ENCODE measurements at regions of chr14 and their contacts with region 1.

Region 1: DNA sequence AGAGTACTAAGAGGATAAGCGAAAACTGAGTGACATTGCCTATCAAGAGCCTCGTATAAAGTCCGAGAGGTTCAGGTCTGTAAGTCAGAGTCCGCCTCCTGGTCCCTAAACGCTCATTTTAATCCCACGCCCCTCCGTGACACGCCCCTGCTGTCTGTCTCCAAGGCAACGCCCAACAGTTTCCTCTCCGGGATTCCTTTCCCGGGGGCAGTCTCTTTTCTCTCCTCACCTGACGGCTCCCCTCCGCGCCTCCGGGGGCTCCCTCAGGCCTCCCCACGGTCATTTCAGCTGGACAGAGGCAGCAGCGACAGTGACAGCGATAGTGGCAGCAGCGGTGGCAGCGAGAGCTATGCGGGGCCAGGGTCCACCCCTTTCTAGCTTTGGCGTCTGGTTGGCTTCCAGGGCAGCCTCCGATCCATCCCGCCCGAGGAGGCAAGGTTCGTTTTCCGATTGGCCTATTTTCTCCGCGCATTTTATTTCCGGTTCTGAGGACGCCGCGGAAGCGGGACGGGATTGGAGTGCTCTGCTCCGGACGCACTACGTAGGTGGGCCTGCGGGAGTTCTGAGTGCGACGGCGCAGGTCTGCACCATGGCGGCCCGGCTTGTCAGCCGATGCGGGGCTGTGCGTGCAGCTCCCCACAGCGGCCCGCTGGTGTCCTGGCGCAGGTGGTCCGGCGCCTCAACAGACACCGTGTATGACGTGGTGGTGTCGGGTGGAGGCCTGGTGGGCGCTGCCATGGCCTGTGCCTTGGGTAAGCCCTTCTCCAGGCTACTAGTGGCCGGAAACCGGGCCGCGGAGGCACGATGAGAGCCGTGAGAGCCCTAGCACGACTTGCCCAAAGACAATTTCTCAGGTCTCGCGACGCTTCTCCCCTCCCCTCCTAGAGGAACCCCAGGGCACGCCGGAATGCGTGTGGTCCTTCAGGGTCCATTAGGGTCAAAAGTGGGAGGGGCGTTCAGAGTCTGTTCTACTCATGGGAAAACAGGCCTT is at the starts of genes COQ6 and FAM161B:
- DNase-seq: peak; percentile 93
- H3K4me3 Mint-ChIP-seq: peak within 1 kb of the TSS; percentile 99
- H3K27ac Mint-ChIP-seq: peak within 1 kb of the TSS; percentile 88
- H3K4me1 Mint-ChIP-seq: peaks cover 21% of the 10 kb centered on the region
- H3K27me3 Mint-ChIP-seq: no peaks in the 10 kb centered on the region
- total RNA-seq, gene COQ6: 17.9 and 19.2 TPM in 2 replicates
- total RNA-seq, gene FAM161B: 0.76 and 0.83 TPM in 2 replicates

Region 2: DNA sequence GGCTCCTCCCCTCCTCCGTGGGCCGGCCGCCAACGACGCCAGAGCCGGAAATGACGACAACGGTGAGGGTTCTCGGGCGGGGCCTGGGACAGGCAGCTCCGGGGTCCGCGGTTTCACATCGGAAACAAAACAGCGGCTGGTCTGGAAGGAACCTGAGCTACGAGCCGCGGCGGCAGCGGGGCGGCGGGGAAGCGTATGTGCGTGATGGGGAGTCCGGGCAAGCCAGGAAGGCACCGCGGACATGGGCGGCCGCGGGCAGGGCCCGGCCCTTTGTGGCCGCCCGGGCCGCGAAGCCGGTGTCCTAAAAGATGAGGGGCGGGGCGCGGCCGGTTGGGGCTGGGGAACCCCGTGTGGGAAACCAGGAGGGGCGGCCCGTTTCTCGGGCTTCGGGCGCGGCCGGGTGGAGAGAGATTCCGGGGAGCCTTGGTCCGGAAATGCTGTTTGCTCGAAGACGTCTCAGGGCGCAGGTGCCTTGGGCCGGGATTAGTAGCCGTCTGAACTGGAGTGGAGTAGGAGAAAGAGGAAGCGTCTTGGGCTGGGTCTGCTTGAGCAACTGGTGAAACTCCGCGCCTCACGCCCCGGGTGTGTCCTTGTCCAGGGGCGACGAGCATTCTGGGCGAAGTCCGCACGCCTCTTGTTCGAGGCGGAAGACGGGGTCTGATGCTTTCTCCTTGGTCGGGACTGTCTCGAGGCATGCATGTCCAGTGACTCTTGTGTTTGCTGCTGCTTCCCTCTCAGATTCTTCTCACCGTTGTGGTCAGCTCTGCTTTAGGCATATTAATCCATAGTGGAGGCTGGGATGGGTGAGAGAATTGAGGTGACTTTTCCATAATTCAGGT is 813.4 kb before region 1 on chr14 and contains the start of gene PSEN1:
- intact Hi-C with region 1: loop called (anchors 1 kb)
- DNase-seq: peak; percentile 98
- H3K4me3 Mint-ChIP-seq: peak within 1 kb of the TSS; percentile 86
- H3K27ac Mint-ChIP-seq: peak within 1 kb of the TSS; percentile 100
- H3K4me1 Mint-ChIP-seq: peaks cover 19% of the 10 kb centered on the region
- H3K27me3 Mint-ChIP-seq: no peaks in the 10 kb centered on the region
- total RNA-seq, gene PSEN1: 41.1 and 41.9 TPM in 2 replicates

Region 3: DNA sequence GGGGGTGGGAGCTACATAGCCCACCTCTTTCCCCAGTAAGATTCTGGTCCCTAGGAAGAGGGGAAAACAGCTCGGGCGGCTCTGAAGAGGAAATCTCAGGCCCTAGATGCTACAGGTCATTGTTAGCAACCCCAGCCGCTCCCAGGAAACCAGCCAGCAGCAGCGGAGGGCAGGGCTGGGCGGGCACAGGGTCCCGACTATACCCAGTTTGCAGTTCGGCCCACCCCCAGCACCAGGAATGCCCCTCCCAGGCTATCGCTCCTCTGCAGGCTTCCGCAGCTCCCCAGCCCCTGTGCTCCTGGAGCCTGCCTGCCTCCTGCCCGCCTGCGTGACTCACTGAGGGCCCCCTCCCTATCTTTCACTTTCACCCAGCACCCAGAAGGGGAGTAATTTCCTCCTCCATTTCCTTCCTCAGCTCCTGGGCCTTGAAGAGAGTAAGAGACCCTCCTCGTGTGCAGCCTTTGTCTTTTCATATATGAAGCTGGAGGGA is 208.6 kb before region 1 on chr14:
- intact Hi-C with region 1: loop called (anchors 10 kb)
- DNase-seq: peak; percentile 61
- H3K4me3 Mint-ChIP-seq: peak overlapping the region; percentile 83
- H3K27ac Mint-ChIP-seq: peak overlapping the region; percentile 86
- H3K4me1 Mint-ChIP-seq: peaks cover 62% of the 10 kb centered on the region
- H3K27me3 Mint-ChIP-seq: no peaks in the 10 kb centered on the region

Region 4: GRCh38 chr14:74018586-74019407 is 68.8 kb after region 1 on chr14 and contains the starts of genes BBOF1 and ENTPD5:
- intact Hi-C with region 1: loop called (anchors 1 kb)
- DNase-seq: peak; percentile 85
- H3K4me3 Mint-ChIP-seq: peak within 1 kb of the TSS; percentile 95
- H3K27ac Mint-ChIP-seq: peak within 1 kb of the TSS; percentile 97
- H3K4me1 Mint-ChIP-seq: peaks cover 17% of the 10 kb centered on the region
- H3K27me3 Mint-ChIP-seq: peaks cover 3% of the 10 kb centered on the region
- total RNA-seq, gene BBOF1: 0.51 and 0.88 TPM in 2 replicates
- total RNA-seq, gene ENTPD5: 10.7 and 12.2 TPM in 2 replicates

Region 5: DNA sequence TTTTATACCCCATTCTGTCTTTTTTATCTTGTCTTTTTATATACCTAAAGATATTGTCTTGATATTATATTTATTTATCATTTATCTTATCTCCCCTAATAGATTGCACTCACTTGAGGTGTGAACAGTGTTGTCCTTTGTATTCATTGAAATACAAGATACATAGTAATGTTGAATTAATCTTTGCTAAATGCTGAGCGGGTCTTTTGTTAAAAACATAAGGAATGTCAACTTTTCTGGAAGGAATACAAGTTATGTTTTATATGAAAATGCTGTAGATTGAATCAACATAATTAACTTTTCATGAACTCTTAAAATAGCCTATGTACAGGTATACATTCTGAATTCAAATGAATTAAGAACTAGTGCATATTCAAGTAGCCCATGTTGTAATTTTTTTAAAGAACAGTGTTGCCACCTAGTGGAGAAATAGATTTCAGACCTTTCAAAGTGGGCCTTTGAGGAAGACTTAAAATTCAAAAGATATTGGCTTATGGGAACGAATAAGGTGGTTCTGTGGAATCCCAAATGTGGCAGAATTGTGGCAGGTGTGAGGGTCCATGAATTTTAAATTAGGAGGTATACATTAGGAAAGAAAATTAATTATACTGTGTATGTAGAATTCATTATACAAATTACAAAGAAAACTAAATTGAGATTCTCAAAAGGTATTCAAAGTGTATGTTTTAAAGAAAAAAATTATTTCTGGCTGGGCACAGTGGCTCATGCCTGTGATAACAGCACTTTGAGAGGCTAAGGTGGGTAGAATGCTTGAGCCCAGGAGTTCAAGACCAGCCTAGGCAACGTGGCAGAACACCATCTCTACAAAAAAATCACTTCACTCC is 88.2 kb after region 1 on chr14:
- intact Hi-C with region 1: loop called (anchors 1 kb)
- DNase-seq: no peak
- H3K4me3 Mint-ChIP-seq: no peak overlapping the region
- H3K27ac Mint-ChIP-seq: no peak overlapping the region
- H3K4me1 Mint-ChIP-seq: no peaks in the 10 kb centered on the region
- H3K27me3 Mint-ChIP-seq: no peaks in the 10 kb centered on the region

Region 6: GRCh38 chr14:74579447-74580274 is 629.6 kb after region 1 on chr14:
- intact Hi-C with region 1: no loop called
- DNase-seq: peak; percentile 19
- H3K4me3 Mint-ChIP-seq: no peak overlapping the region
- H3K27ac Mint-ChIP-seq: peak overlapping the region; percentile 89
- H3K4me1 Mint-ChIP-seq: peaks cover 53% of the 10 kb centered on the region
- H3K27me3 Mint-ChIP-seq: no peaks in the 10 kb centered on the region